Activated CD4-positive, alpha-beta T cell treated with anti-CD3 and anti-CD28 coated beads for 36 hours (primary cell): ENCODE measurements at regions of chr10 and their contacts with region 1.

Region 1: DNA sequence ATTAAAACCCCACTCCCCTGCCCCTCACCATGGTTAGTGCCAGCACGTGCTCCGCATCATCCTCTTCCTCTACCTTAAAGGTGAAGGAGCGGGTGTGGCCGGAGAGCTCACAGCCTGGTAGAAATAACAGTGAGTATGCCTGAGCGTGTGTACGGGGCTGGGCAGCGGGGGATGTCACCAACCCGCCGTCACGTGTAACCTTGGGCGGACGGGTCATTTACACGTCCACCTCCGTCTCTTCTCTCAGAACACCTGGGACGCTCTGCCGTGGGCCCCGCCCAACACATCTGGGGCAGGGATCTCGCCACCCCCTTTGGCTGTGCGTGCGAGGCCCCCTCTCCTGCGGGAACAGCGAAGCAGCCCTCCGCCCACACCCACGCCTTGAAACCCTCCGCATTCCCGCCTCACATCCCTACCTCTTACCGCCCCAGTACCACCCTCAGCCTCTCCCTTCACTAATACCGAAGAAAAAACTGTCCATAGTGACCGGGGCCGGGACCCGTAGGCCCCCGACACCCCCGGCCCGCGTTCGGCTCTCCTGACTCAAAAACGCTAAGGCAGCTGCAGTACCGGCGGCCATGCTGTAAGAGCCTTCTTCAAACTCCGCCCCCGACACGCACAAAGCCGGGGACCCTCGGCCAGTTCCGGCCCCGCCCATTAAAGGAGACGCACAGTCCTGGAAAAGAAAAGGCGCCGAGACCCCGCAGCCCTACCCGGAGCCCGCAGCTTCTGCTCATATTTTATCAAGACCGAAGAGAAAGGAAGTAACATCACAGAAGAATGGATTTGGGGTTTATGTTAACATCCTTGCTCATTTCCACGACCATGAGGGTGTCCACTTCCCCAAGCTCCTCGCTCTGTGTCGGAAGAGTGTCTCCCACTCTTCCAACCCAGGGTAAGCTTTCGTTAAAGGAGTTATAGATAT is at the start of gene NPM3:
- DNase-seq: peak; percentile 94
- ATAC-seq: peak; percentile 82
- H3K4me3 Mint-ChIP-seq: peak within 1 kb of the TSS; percentile 94
- H3K27ac Mint-ChIP-seq: peak within 1 kb of the TSS; percentile 97
- H3K4me1 Mint-ChIP-seq: peaks cover 52% of the 10 kb centered on the region
- H3K27me3 Mint-ChIP-seq: peaks cover 6% of the 10 kb centered on the region
- total RNA-seq, gene NPM3: 207 to 214 TPM

Region 2: GRCh38 chr10:101060036-101060950 is 722.8 kb before region 1 on chr10:
- CTCF ChIA-PET with region 1: no interaction called
- POLR2A ChIA-PET with region 1: no interaction called
- intact Hi-C with region 1: loop called in 1 of 2 experiments (anchors 2 kb)
- DNase-seq: peak; percentile 95
- ATAC-seq: peak; percentile 75
- H3K4me3 Mint-ChIP-seq: peak overlapping the region; percentile 82
- H3K27ac Mint-ChIP-seq: peak overlapping the region; percentile 96
- H3K4me1 Mint-ChIP-seq: peaks cover 22% of the 10 kb centered on the region
- H3K27me3 Mint-ChIP-seq: peaks cover 22% of the 10 kb centered on the region

Region 3: GRCh38 chr10:101353692-101354327 is 429.3 kb before region 1 on chr10 and contains the start of gene BTRC:
- CTCF ChIA-PET with region 1: no interaction called
- POLR2A ChIA-PET with region 1: no interaction called
- intact Hi-C with region 1: loop called in 1 of 2 experiments (anchors 2 kb)
- DNase-seq: peak; percentile 97
- ATAC-seq: peak; percentile 98
- H3K4me3 Mint-ChIP-seq: peak within 1 kb of the TSS; percentile 91
- H3K27ac Mint-ChIP-seq: peak within 1 kb of the TSS; percentile 94
- H3K4me1 Mint-ChIP-seq: peaks cover 27% of the 10 kb centered on the region
- H3K27me3 Mint-ChIP-seq: peaks cover 12% of the 10 kb centered on the region
- total RNA-seq, gene BTRC: 15.5 to 18.7 TPM

Region 4: GRCh38 chr10:101363850-101364400 is 419.1 kb before region 1 on chr10:
- CTCF ChIA-PET with region 1: no interaction called
- POLR2A ChIA-PET with region 1: no interaction called
- intact Hi-C with region 1: no loop called
- DNase-seq: no peak
- ATAC-seq: no peak
- H3K4me3 Mint-ChIP-seq: no peak overlapping the region
- H3K27ac Mint-ChIP-seq: no peak overlapping the region
- H3K4me1 Mint-ChIP-seq: peaks cover 21% of the 10 kb centered on the region
- H3K27me3 Mint-ChIP-seq: no peaks in the 10 kb centered on the region

Region 5: DNA sequence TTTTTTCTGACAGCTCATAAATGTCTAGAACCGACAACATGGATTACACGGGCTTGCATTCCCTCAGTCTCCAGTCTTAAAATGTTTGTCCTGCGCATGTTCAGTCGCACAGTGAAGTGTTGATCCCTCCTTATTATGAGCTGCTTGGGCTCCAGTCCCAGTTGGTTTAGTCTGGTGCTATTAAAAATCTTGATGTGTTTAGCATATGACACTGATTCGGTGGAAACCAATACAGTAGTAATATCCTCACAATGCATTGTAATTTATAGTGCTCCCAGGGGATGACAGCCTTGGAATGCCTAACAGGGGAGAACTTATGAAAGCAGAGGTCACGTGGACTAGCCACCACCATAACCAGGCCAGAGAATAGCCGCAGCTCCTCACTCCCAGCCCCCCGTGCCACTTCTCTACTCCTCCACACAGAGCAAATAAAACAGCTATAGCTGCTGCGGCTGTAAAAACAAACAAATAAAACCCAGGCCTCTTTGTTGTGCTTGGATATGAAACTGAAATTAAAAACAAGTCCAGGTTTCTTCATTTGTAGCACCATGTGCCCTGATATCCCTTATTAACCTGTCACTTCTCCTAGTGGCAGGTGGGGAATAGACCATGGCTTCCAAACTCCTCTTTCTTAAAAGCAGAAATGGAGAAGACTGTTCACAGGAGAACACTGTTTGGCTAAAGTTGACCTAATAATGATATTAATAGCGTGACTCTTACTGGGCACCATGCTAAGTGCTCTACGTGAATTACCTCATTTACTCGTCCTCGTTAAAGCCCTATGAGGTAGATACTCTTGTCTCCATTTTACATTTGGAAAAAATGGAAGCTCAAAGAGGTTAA is 187.3 kb before region 1 on chr10:
- CTCF ChIA-PET with region 1: interaction called, 43 read pairs
- POLR2A ChIA-PET with region 1: no interaction called
- intact Hi-C with region 1: no loop called
- DNase-seq: no peak
- ATAC-seq: no peak
- H3K4me3 Mint-ChIP-seq: no peak overlapping the region
- H3K27ac Mint-ChIP-seq: no peak overlapping the region
- H3K4me1 Mint-ChIP-seq: no peaks in the 10 kb centered on the region
- H3K27me3 Mint-ChIP-seq: no peaks in the 10 kb centered on the region

Region 6: GRCh38 chr10:101797403-101798059 is 14.5 kb after region 1 on chr10:
- CTCF ChIA-PET with region 1: interaction called, 35 read pairs
- POLR2A ChIA-PET with region 1: interaction called, 4 read pairs
- intact Hi-C with region 1: no loop called
- DNase-seq: no peak
- ATAC-seq: no peak
- H3K4me3 Mint-ChIP-seq: no peak overlapping the region
- H3K27ac Mint-ChIP-seq: peak overlapping the region; percentile 13
- H3K4me1 Mint-ChIP-seq: peaks cover 12% of the 10 kb centered on the region
- H3K27me3 Mint-ChIP-seq: no peaks in the 10 kb centered on the region

Region 7: DNA sequence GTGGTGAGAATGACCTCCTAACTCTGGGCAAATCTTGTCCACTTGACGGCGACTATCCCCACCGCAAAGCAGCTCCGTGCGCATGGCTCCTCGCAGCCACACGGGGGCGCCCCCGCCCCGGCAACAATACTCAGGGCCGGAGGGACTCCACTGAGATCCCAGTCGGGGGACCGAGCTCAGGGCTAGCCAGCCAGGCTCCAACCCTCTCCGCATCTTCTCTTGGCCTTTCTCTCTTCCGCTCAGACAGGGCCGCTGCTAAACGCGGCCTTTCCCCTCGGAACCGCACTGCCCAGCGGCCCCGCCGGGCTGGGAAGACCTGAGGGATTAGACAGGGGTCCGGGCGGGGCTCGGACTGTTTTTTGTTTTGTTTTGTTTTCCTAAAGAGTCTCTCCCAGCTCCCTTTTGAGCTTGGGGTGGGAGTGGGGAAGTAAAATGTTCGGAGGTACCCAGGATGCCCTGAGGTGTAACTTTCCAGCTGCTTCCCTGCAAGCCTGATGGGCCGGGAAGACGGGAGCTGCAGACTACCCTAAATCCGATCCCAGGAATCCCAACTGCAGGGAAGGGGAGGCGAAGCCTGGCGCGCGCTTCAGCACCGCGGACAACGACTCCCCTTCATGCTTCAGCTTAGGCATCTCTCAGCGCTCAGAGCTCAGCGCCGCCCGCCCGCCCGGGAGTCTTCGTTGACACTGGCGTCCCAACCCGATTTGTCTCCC is 57.8 kb after region 1 on chr10:
- CTCF ChIA-PET with region 1: interaction called, 21 read pairs
- POLR2A ChIA-PET with region 1: no interaction called
- intact Hi-C with region 1: no loop called
- DNase-seq: peak; percentile 89
- ATAC-seq: peak; percentile 68
- H3K4me3 Mint-ChIP-seq: peak overlapping the region; percentile 73
- H3K27ac Mint-ChIP-seq: no peak overlapping the region
- H3K4me1 Mint-ChIP-seq: peaks cover 44% of the 10 kb centered on the region
- H3K27me3 Mint-ChIP-seq: peaks cover 9% of the 10 kb centered on the region

Region 8: DNA sequence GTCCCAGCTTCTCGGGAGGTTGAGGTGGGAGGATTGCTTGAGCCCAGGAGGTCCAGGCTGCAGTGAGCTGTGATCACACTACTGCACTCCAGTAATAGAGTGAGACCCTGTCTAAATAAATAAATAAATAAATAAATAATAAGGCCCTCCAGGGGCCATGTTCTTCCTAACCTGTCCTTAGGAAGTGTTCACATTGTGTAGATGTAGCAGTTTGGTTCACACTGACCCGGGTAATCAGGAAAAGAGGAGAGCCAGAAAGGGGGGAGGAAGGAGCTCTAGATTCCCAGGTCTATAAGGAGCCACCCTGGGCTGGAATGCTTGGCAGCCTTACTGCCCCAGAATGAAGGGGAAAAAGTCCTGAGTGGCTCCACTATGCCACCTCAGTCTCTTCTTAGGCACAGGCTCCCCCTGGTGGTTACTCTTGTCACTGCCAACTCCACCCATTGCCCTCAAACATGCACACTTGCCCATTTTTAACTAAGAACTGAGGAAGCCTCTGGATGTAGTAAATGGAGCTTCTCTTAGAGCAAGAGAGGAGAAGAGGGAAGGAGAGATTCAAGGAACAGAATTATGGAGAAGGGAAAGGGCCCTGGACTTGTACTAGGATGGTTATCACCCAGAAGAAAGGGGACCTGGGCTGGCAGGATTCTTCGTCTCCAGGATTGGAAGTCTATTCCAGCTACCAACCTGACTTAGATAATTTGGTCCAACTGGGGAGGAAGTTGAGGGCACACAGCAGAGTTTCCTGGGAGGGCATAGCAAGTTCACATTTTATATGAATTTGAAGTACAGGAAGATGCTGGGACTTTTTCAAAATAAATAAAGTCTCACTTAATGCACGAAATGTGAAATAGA is 289.8 kb after region 1 on chr10:
- CTCF ChIA-PET with region 1: interaction called, 6 read pairs
- POLR2A ChIA-PET with region 1: no interaction called
- intact Hi-C with region 1: loop called in 1 of 2 experiments (anchors 2 kb)
- DNase-seq: peak; percentile 89
- ATAC-seq: peak; percentile 97
- H3K4me3 Mint-ChIP-seq: no peak overlapping the region
- H3K27ac Mint-ChIP-seq: no peak overlapping the region
- H3K4me1 Mint-ChIP-seq: peaks cover 2% of the 10 kb centered on the region
- H3K27me3 Mint-ChIP-seq: no peaks in the 10 kb centered on the region